ENCODE measurements at regions of chr12 and their contacts with region 1.

Region 1: DNA sequence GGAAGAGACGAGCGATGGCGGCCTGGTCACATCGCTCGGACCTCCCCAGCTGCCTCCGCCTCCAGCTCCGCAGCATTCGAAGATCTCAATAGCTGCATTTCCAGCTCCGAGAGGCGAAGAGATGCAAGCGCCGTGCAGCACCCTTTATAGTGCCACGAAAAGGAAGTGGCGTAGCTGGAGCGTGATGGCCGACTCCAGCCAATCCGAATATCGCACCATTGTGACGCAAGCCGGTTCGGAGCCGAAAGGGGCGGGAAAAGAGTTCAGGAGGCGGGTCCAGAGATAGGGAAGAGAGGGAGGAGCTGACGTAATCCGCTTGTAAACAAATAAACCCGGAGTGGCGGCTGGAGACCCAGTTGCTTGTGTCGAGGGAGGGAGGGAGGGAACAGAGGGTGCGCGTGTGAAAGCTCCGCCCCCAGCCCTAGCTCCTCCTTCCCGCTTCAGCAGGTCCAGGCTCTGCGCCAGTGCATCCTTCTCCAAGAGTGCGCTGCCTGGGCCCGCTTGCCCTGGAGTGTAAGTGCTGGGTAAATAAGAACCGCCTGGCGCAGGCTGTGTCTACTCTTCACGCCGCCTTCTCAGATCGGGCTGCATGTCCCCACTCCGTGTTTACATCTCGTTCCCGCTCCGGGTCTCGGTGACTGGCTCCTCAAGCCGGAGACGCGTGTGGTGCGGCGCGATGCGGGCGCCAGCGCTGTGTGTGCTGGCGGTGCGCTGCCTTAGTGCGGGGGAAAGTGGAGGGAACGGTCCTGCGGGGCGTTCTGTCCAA is at the start of gene BTG1:
- DNase-seq: peak; percentile 100
- H3K4me3 ChIP-seq: peak within 1 kb of the TSS; percentile 84 to 93
- H3K27ac ChIP-seq: peak within 1 kb of the TSS; percentile 99
- H3K4me1 ChIP-seq: no peaks in the 10 kb centered on the region
- H3K27me3 ChIP-seq: no peaks in the 10 kb centered on the region
- CTCF ChIP-seq: peak in 2 of 4 experiments; percentile 16 to 44
- POLR2A ChIP-seq: peak; percentile 96 to 99
- total RNA-seq, gene BTG1: 40.4 to 214 (median 70.1) TPM

Region 2: DNA sequence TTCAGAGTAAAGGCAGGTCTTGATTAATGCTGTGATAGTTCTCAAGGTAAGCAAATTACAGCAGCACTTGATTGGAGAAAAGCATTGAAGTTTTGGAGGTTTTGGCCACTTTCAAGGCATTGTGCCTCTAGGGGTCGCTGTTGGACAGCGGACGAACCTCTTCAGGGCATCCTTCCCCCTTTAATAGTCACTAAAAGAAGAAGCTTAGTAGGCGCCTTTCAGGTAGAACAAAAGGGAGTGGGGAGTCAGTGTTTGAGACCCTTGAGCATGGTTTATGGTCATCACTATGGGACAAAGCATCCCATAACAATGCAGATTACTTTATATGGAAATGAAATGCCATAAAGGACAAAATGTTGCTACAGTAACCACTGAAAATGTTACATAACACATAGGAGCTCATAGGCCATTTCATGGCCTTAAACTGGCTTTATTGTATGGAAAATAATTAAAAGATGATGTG is 763.8 kb before region 1 on chr12:
- intact Hi-C with region 1: loop called (anchors 10 kb)
- DNase-seq: peak; percentile 84 to 89
- H3K4me3 ChIP-seq: peak overlapping the region; percentile 43 to 56
- H3K27ac ChIP-seq: peak overlapping the region; percentile 83 to 98
- H3K4me1 ChIP-seq: no peaks in the 10 kb centered on the region
- H3K27me3 ChIP-seq: no peaks in the 10 kb centered on the region
- CTCF ChIP-seq: peak; percentile 82 to 94 (median 86)
- POLR2A ChIP-seq: no peak

Region 3: DNA sequence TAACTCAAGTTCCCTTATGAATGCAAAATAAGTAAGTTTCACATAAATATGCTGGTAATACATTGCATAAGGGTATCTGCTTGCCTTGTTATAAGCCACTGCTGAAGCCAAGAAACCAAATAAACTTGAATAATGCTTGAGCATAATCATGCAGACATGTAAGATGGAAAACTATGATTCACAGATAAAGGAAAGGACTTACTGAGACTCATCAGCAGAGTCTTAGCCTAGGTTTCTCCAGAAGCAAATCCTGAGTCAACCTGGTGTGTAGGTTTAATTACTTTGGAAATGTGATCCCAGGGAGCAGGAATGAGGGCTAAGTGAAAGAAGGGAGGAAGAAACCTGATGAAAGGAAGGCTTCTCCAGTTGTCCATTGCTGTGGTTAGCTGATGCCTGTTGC is 107.4 kb after region 1 on chr12:
- intact Hi-C with region 1: no loop called
- DNase-seq: no peak
- H3K4me3 ChIP-seq: no peak overlapping the region
- H3K27ac ChIP-seq: no peak overlapping the region
- H3K4me1 ChIP-seq: no peaks in the 10 kb centered on the region
- H3K27me3 ChIP-seq: no peaks in the 10 kb centered on the region
- CTCF ChIP-seq: no peak
- POLR2A ChIP-seq: no peak

Region 4: GRCh38 chr12:92570056-92570753 is 424.3 kb after region 1 on chr12:
- intact Hi-C with region 1: loop called (anchors 5 kb)
- DNase-seq: peak; percentile 41 to 81
- H3K4me3 ChIP-seq: no peak overlapping the region
- H3K27ac ChIP-seq: peak overlapping the region in 1 of 2 donors; percentile 28
- H3K4me1 ChIP-seq: no peaks in the 10 kb centered on the region
- H3K27me3 ChIP-seq: no peaks in the 10 kb centered on the region
- CTCF ChIP-seq: peak; percentile 76 to 94 (median 83)
- POLR2A ChIP-seq: no peak

Measured in uterus (tissue), 4 donors.